ENCODE measurements at regions of chrX and their contacts with region 1.

Region 1: GRCh38 chrX:5718651-5719050 is 510.0 kb downstream of the NLGN4X start:
- DNase-seq: no peak
- ATAC-seq: no peak
- H3K4me3 ChIP-seq: no peak overlapping the region
- H3K27ac ChIP-seq: no peak overlapping the region
- H3K4me1 ChIP-seq: no peaks in the 10 kb centered on the region
- H3K27me3 ChIP-seq: no peaks in the 10 kb centered on the region
- CTCF ChIP-seq: no peak

Region 2: GRCh38 chrX:5632061-5632614 is 86.5 kb before region 1 on chrX:
- intact Hi-C with region 1: no loop called
- DNase-seq: no peak
- ATAC-seq: no peak
- H3K4me3 ChIP-seq: no peak overlapping the region
- H3K27ac ChIP-seq: no peak overlapping the region
- H3K4me1 ChIP-seq: no peaks in the 10 kb centered on the region
- H3K27me3 ChIP-seq: no peaks in the 10 kb centered on the region
- CTCF ChIP-seq: no peak

Region 3: DNA sequence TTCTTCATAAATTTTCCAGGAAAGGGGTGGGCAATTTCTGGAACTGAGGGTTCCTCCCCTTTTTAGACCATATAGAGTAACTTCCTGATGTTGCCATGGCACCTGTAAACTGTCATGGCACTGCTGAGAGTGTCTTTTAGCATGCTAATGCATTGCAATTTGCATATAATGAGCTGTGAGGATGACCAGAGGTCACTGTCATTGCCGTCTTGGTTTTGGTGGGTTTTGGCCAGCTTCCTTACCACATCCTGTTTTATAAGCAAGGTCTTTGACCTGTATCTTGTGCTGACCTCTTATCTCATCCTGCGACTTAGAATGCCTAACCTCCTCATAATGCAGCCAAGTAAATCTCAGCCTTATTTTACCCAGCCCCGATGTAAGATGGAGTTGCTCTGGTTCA is 67.7 kb before region 1 on chrX:
- intact Hi-C with region 1: loop called in 1 of 2 experiments (anchors 10 kb)
- DNase-seq: no peak
- ATAC-seq: no peak
- H3K4me3 ChIP-seq: no peak overlapping the region
- H3K27ac ChIP-seq: no peak overlapping the region
- H3K4me1 ChIP-seq: no peaks in the 10 kb centered on the region
- H3K27me3 ChIP-seq: no peaks in the 10 kb centered on the region
- CTCF ChIP-seq: no peak